ENCODE measurements at regions of chr12 and their contacts with region 1.

Region 1: DNA sequence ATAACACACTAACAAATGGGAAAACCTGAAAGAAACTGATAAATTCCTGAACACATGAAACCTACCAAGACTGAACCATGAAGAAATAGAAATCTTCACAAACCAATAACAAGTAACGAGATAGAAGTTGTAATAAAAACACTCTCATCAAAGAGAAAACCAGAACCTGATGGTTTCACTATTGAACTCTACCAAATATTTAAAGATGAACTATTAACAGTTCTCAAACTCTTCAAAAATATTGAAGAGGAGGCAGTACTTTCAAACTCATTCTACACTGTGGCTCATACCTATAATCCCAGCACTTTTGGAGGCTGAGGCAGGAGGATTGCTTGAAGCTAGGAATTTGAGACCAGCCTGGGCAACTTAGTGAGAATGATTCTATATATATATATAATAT is 48.4 kb upstream of the TMTC2 start:
- DNase-seq: no peak
- H3K4me3 Mint-ChIP-seq: no peak overlapping the region
- H3K27ac Mint-ChIP-seq: peak overlapping the region; percentile 5
- H3K4me1 Mint-ChIP-seq: peaks cover 23% of the 10 kb centered on the region
- H3K27me3 Mint-ChIP-seq: no peaks in the 10 kb centered on the region
- CTCF ChIP-seq: no peak

Region 2: DNA sequence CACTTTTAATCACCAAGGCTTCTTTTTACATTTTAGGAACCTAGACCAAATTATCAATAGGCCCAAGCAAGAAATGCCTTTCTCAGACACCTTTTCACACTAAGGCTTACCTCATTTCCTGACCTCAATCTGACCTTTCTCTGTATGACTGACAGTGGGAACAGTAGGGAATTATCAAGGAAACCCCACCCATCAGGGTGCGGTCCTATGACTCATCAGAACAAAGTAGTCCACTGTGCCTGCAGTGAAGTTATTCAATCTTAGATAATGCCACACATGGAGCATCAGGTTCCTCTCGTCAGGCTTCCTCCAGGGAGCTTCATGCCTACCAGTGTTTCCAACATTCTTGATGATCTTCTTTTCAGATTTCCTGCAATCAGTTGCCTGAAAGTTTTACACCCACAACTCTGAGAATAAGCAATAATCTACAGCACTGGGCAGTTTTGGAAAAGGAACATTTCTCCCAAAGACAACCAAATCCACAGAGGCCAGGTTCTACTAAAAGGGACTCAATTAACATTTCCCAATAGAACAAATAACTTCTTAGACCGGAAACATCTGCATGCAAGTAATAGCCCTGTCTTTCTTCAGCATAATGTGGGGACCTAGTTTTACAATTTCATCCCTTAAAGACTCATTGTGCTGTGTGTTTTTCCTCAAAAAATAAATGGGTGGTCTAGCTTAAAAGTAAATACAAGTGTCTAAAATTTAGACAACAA is 12.5 kb after region 1 on chr12:
- CTCF ChIA-PET with region 1: interaction called, 11 read pairs
- intact Hi-C with region 1: no loop called
- DNase-seq: peak; percentile 91
- H3K4me3 Mint-ChIP-seq: peak overlapping the region; percentile 47
- H3K27ac Mint-ChIP-seq: peak overlapping the region; percentile 98
- H3K4me1 Mint-ChIP-seq: peaks cover 43% of the 10 kb centered on the region
- H3K27me3 Mint-ChIP-seq: no peaks in the 10 kb centered on the region
- CTCF ChIP-seq: no peak

Measured in Calu3 (cell line).